Activated CD4-positive, alpha-beta T cell treated with anti-CD3 and anti-CD28 coated beads, Interleukin-2, amount 10 ng/mL, durations not matched to agents 24 days and 14 days (primary cell): ENCODE measurements at regions of chr3 and their contacts with region 1.

Region 1: GRCh38 chr3:31219131-31219843 is 313.4 kb upstream of the STT3B start:
- DNase-seq: no peak
- H3K4me3 Mint-ChIP-seq: no peak overlapping the region
- H3K27ac Mint-ChIP-seq: no peak overlapping the region
- H3K4me1 Mint-ChIP-seq: peaks cover 74% of the 10 kb centered on the region
- H3K27me3 Mint-ChIP-seq: no peaks in the 10 kb centered on the region

Region 2: GRCh38 chr3:31472479-31473390 is 253.4 kb after region 1 on chr3:
- intact Hi-C with region 1: loop called (anchors 5 kb)
- DNase-seq: peak; percentile 70
- H3K4me3 Mint-ChIP-seq: no peak overlapping the region
- H3K27ac Mint-ChIP-seq: peak overlapping the region; percentile 9
- H3K4me1 Mint-ChIP-seq: peaks cover 13% of the 10 kb centered on the region
- H3K27me3 Mint-ChIP-seq: peaks cover 17% of the 10 kb centered on the region